ENCODE measurements at regions of chr16 and their contacts with region 1.

Region 1: GRCh38 chr16:71311553-71312158 is 22.5 kb upstream of the CMTR2 start:
- DNase-seq: no peak
- H3K4me3 ChIP-seq: no peak overlapping the region
- H3K27ac ChIP-seq: no peak overlapping the region
- H3K4me1 ChIP-seq: no peaks in the 10 kb centered on the region
- H3K27me3 ChIP-seq: peaks cover 17% of the 10 kb centered on the region
- CTCF ChIP-seq: peak; percentile 59 to 77 (median 73)
- EP300 ChIP-seq: no peak
- POLR2A ChIP-seq: no peak

Region 2: DNA sequence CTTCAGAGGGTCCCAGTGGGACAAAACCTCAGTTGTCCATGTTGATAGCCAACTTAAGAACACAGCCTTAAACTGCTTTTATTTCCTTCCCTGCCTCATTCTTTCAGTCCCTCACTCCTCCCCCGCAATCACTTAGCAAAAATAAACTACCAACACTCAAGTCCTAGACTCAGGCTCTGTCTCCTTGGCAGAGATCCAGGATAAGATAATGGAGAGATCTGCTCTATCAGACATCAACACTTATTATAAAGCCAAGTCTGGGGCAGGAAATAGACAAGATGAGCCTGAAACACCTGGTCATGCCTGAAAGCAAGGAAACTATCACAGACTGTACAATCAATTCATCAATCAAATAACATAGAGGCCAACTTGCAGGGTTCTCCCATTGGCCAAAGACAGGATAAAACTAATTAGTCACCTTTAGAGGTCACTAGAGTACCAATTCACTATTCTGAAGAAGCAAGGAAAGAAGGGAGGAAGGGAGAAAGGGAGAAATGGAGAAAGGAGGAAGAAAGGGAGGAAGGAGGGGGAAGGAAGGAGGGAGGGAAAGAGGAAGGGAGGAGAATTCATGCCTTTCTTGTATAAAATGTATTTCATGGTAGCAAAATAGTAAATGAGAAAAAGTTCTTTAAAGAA is 96.8 kb before region 1 on chr16:
- in situ Hi-C with region 1: loop called in 2 of 4 experiments (anchors 10 to 25 kb)
- intact Hi-C with region 1: no loop called
- DNase-seq: no peak
- H3K4me3 ChIP-seq: no peak overlapping the region
- H3K27ac ChIP-seq: no peak overlapping the region
- H3K4me1 ChIP-seq: no peaks in the 10 kb centered on the region
- H3K27me3 ChIP-seq: no peaks in the 10 kb centered on the region
- CTCF ChIP-seq: peak in 2 of 5 experiments; percentile 5 to 16
- EP300 ChIP-seq: no peak
- POLR2A ChIP-seq: no peak

Measured in transverse colon (tissue), 4 donors.